G401 (cell line): ENCODE measurements at regions of chr6 and their contacts with region 1.

Region 1: DNA sequence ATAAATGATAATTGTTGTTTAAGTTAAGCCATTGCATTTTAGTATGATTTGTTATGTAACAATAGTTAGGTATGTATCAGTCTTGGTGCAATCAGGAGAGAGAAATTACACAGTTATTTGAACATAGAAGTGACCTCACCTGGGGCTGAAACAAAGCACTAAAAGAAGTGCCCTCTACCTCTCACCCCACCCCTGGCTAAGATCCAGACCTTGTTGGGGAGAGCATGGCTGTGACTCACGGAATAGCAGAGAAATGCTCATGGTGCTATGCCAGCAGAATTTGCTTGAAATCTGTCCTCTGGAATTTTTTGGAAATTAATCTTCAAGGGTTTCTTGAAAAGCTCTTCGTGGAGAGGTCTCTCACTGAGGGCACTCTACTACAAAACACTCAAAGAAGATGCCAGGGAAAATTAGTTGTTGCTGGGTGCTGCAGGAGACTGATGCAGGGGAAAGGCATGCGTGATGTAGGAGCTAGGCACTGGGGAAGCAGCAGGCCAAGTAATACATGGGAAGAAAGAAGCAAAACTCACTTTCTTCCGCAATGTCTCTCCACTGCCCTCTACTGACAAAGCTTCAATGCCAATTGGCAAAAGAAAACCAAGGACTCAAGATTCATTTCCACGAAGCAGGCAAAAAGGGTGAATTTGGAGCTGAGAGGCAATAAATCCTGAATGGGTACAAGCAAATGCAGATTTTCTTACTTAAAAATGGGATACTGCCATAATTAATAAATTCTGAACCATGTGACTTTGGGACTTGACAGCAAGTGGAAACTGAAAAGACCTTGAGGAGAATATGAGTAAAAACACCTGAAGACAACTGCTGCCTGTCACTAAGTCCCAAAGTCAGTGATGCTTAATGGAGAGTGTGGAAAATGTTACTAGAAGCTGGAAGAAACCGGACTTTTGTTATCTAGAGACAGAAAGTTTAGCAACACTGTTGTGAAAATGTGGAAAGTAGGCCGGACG is 136.3 kb upstream of the ZNF184 start:
- DNase-seq: peak; percentile 46

Region 2: GRCh38 chr6:27518881-27519795 is 90.1 kb before region 1 on chr6:
- in situ Hi-C with region 1: loop called (anchors 25 kb)
- DNase-seq: peak; percentile 90

Region 3: GRCh38 chr6:28005124-28005890 is 396.1 kb after region 1 on chr6:
- in situ Hi-C with region 1: no loop called
- DNase-seq: no peak